ENCODE measurements at regions of chr3 and their contacts with region 1.

Region 1: DNA sequence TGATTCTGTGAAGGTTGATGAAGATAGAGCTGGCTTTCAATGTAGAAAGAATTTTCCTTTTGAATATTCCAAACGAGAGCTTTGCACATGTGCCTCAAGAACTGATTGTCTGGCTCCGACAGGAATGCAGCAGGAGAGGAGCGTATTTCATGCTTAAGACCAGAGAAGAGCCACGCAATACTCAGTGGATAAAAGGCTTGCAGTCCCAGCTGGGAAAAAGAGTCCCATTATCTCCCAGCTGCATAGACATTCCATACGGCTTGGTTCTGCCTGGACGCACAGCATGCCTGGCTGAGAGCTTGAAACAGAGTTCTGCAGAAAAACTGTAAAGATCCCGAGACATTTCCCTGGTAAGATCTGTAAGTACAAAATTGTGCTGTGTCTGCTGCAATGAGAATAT is at the start of gene CNTN6:
- DNase-seq: no peak
- H3K4me3 ChIP-seq: no peak within 1 kb of the TSS
- H3K27ac ChIP-seq: no peak within 1 kb of the TSS
- H3K4me1 ChIP-seq: no peaks in the 10 kb centered on the region
- H3K27me3 ChIP-seq: no peaks in the 10 kb centered on the region
- CTCF ChIP-seq: no peak
- EP300 ChIP-seq: no peak
- POLR2A ChIP-seq: no peak
- total RNA-seq, gene CNTN6: not detected

Region 2: GRCh38 chr3:1079662-1080061 is 13.1 kb before region 1 on chr3:
- in situ Hi-C with region 1: no loop called
- intact Hi-C with region 1: no loop called
- DNase-seq: no peak
- H3K4me3 ChIP-seq: no peak overlapping the region
- H3K27ac ChIP-seq: no peak overlapping the region
- H3K4me1 ChIP-seq: no peaks in the 10 kb centered on the region
- H3K27me3 ChIP-seq: no peaks in the 10 kb centered on the region
- CTCF ChIP-seq: no peak
- EP300 ChIP-seq: no peak
- POLR2A ChIP-seq: no peak

Region 3: GRCh38 chr3:1117843-1118473 is 25.2 kb after region 1 on chr3:
- in situ Hi-C with region 1: no loop called
- intact Hi-C with region 1: no loop called
- DNase-seq: no peak
- H3K4me3 ChIP-seq: no peak overlapping the region
- H3K27ac ChIP-seq: no peak overlapping the region
- H3K4me1 ChIP-seq: no peaks in the 10 kb centered on the region
- H3K27me3 ChIP-seq: no peaks in the 10 kb centered on the region
- CTCF ChIP-seq: no peak
- EP300 ChIP-seq: no peak
- POLR2A ChIP-seq: no peak

Region 4: GRCh38 chr3:2114617-2115275 is 1022.0 kb after region 1 on chr3:
- in situ Hi-C with region 1: no loop called
- intact Hi-C with region 1: loop called (anchors 5 kb)
- DNase-seq: no peak
- H3K4me3 ChIP-seq: no peak overlapping the region
- H3K27ac ChIP-seq: no peak overlapping the region
- H3K4me1 ChIP-seq: no peaks in the 10 kb centered on the region
- H3K27me3 ChIP-seq: no peaks in the 10 kb centered on the region
- CTCF ChIP-seq: no peak
- EP300 ChIP-seq: no peak
- POLR2A ChIP-seq: no peak

Measured in transverse colon (tissue), 4 donors.